K562 (cell line): ENCODE measurements at regions of chr13 and their contacts with region 1.

Region 1: GRCh38 chr13:99459099-99459850 is 42.0 kb upstream of the TM9SF2 start:
- DNase-seq: peak in 3 of 4 experiments; percentile 12 to 67 (median 42)
- ATAC-seq: peak; percentile 97
- H3K4me3 ChIP-seq: no peak overlapping the region
- H3K27ac ChIP-seq: no peak overlapping the region
- H3K4me1 ChIP-seq: peaks cover 0 to 3% of the 10 kb centered on the region in 2 experiments; a peak in 2 of 5 replicates
- H3K27me3 ChIP-seq: no peaks in the 10 kb centered on the region
- CTCF ChIP-seq: peak; percentile 42 to 47 (median 45); a peak in 4 of 6 replicates
- EP300 ChIP-seq: no peak
- POLR2A ChIP-seq: no peak
- RAD21 ChIP-seq: peak in 1 of 2 experiments; percentile 12; a peak in 1 of 4 replicates

Region 2: GRCh38 chr13:99606324-99607066 is 147.2 kb after region 1 on chr13:
- CTCF ChIA-PET with region 1: no interaction called
- POLR2A ChIA-PET with region 1: no interaction called
- in situ Hi-C with region 1: loop called (anchors 10 kb)
- intact Hi-C with region 1: no loop called
- DNase-seq: peak; percentile 81 to 96 (median 94)
- ATAC-seq: peak; percentile 93
- H3K4me3 ChIP-seq: peak within 1 kb of the TSS; percentile 73
- H3K27ac ChIP-seq: peak within 1 kb of the TSS; percentile 94
- H3K4me1 ChIP-seq: peaks cover 5 to 10% of the 10 kb centered on the region in 2 experiments; a peak in 2 of 5 replicates
- H3K27me3 ChIP-seq: no peaks in the 10 kb centered on the region
- CTCF ChIP-seq: peak in 1 of 3 experiments; percentile 10; a peak in 1 of 6 replicates
- EP300 ChIP-seq: no peak
- POLR2A ChIP-seq: peak; percentile 75
- RAD21 ChIP-seq: no peak